Motor neuron (in vitro differentiated cells): ENCODE measurements at regions of chr19 and their contacts with region 1.

Region 1: DNA sequence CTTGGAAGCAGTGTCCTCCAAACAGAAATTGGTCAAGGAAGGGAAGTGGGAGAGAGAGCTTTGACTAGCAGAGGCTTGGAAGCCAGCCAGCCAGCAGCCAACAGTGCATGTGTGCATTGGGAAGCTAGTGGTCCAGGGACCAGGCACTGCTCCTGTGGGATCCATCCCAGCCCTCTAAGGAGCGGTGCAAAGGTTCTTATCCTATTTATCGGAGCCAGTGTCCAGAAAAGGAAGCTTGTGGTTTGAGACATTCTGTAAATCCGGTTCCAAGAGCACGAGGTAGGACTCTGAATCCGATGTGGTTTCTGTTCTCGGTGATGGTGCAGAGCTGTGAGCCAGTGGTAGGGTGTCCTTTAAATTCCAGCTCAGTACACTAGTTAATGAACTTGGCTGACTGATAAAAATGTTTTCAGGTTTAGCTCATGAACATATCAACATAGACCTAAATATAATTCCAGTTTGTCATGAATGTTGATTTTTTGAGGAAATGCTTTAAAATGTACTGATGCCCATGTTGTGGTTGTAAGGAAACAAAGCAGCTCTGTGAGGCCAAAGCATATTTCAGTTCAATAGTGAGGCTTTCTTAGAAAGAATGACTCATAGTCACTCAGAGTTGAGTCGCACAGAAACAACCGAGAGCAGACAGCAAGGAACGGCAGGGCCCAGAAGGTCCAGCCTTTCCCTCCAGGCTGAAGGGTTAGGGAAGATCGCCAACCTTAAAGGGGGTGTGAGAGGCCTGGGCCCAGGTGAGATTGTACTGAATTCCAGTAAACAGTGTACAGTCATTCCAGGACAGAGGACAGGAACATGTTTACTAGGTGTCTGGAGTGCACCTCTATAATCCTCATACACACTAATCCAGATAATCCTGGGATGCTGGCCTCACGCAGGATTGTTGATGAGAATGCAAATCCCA is 21.5 kb upstream of the GARRE1 start:
- ATAC-seq: peak; percentile 50 to 93 (median 88)
- H3K4me3 ChIP-seq: no peak overlapping the region
- H3K27ac ChIP-seq: no peak overlapping the region
- H3K4me1 ChIP-seq: no peaks in the 10 kb centered on the region

Region 2: DNA sequence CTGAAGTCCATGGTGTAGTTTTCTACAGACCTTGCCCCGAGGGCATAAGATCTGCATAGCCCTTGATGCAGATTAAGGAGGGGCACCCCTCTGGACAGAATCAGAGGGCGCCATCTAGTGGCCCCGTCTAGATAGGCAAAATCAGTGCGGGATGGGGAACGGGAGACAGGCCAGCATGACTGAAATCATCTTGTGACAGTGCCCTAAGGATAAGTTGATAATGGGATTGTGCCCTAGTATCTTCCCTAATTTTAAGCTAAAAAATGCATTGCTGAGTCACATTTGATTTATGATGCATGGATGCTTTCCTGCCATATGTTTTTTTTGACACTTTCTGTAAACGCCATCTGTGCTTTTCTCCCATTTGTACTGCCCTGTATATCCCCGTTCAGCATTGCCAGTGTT is 113.1 kb after region 1 on chr19:
- in situ Hi-C with region 1: loop called in 1 of 9 experiments (anchors 25 kb)
- ATAC-seq: peak; percentile 38 to 99 (median 68)
- H3K4me3 ChIP-seq: no peak overlapping the region
- H3K27ac ChIP-seq: no peak overlapping the region
- H3K4me1 ChIP-seq: no peaks in the 10 kb centered on the region